Psoas muscle (tissue), 8 donors: ENCODE measurements at regions of chr22 and their contacts with region 1.

Region 1: GRCh38 chr22:31107178-31107893 is at the start of gene SELENOM:
- DNase-seq: peak; percentile 97 to 99
- ATAC-seq: peak; percentile 91 to 95 (median 92)
- H3K4me3 ChIP-seq: peak within 1 kb of the TSS; percentile 76
- H3K27ac ChIP-seq: peak within 1 kb of the TSS; percentile 89
- H3K4me1 ChIP-seq: peaks cover 17% of the 10 kb centered on the region
- H3K27me3 ChIP-seq: no peaks in the 10 kb centered on the region
- CTCF ChIP-seq: peak; percentile 92
- total RNA-seq, gene SELENOM: 45.4 to 68.2 (median 52.3) TPM

Region 2: GRCh38 chr22:31055635-31056159 is 51.6 kb before region 1 on chr22:
- intact Hi-C with region 1: no loop called
- DNase-seq: peak; percentile 86 to 93
- ATAC-seq: peak; percentile 65 to 87 (median 85)
- H3K4me3 ChIP-seq: no peak overlapping the region
- H3K27ac ChIP-seq: peak overlapping the region; percentile 61
- H3K4me1 ChIP-seq: no peaks in the 10 kb centered on the region
- H3K27me3 ChIP-seq: no peaks in the 10 kb centered on the region
- CTCF ChIP-seq: no peak

Region 3: DNA sequence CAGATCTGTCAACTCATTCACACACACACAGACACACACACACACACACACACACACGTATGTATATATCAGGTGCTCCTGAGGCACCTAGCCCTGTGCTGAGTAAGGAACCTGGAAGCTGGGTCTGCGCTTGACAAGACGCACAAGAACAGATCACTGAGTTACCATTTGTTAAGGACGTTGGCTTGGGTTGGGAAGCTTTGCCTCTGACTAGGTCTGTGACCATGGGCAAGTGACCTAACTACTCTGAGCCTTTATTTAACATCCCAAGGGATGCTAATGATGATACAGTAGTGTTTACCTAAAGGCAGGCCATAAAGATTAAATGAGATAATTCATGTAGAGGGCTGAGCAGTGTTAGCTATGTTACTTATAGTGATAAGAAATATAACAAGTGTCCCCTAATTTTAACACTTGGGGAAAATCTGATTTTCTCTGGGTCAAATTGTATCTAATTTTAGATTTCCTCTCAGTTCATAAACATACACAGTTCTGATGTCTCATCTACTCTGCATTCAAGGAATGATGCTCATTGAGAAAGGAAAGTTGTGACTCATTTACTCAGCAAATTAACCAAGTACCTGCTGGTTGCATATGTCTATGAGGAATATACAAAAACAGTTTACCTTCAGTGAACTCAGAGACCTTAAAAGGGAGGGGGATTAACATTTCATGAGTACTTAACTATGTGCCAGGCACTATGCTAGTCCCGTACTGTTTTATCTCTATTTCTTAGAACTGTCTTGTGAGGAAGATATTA is 66.2 kb after region 1 on chr22:
- intact Hi-C with region 1: no loop called
- DNase-seq: no peak
- ATAC-seq: peak; percentile 69 to 82 (median 78)
- H3K4me3 ChIP-seq: no peak overlapping the region
- H3K27ac ChIP-seq: peak overlapping the region; percentile 86
- H3K4me1 ChIP-seq: peaks cover 78% of the 10 kb centered on the region
- H3K27me3 ChIP-seq: no peaks in the 10 kb centered on the region
- CTCF ChIP-seq: no peak

Region 4: DNA sequence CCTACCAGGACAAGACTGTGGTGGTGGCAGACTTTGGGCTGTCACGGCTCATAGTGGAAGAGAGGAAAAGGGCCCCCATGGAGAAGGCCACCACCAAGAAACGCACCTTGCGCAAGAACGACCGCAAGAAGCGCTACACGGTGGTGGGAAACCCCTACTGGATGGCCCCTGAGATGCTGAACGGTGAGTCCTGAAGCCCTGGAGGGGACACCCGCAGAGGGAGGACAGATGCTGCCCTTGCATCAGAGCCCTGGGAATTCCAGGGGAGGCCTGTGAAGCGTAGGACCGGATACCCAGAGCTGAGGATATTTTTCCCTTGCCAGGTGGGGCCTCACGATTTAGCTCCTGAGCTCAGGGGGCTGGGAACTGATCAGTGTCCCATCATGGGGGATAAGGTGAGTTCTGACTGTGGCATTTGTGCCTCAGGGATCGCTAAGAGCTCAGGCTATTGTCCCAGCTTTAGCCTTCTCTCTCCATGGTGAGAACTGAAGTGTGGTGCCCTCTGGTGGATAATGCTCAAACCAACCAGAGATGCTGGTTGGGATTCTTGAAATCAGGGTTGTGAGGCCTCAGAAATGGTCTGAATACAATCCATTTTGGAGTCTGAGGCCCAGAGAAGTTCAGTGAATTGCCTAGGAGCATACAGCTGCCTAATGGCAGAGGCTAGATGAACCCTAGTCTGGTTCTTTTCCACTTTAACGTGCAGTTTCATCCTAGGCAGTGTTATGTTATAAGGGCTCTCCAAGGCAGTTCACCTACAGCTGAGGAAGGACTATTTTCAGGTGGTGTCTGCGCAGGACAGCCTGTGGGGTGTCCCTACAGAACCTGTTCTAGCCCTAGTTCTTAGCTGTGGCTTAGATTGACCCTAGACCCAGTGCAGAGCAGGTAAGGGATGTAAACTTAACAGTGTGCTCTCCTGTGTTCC is 165.4 kb after region 1 on chr22:
- intact Hi-C with region 1: loop called in 1 of 2 experiments (anchors 10 kb)
- DNase-seq: no peak
- ATAC-seq: peak; percentile 61 to 90 (median 74)
- H3K4me3 ChIP-seq: no peak overlapping the region
- H3K27ac ChIP-seq: no peak overlapping the region
- H3K4me1 ChIP-seq: no peaks in the 10 kb centered on the region
- H3K27me3 ChIP-seq: no peaks in the 10 kb centered on the region
- CTCF ChIP-seq: peak; percentile 71